HCT116 (cell line): ENCODE measurements at regions of chr12 and their contacts with region 1.

Region 1: DNA sequence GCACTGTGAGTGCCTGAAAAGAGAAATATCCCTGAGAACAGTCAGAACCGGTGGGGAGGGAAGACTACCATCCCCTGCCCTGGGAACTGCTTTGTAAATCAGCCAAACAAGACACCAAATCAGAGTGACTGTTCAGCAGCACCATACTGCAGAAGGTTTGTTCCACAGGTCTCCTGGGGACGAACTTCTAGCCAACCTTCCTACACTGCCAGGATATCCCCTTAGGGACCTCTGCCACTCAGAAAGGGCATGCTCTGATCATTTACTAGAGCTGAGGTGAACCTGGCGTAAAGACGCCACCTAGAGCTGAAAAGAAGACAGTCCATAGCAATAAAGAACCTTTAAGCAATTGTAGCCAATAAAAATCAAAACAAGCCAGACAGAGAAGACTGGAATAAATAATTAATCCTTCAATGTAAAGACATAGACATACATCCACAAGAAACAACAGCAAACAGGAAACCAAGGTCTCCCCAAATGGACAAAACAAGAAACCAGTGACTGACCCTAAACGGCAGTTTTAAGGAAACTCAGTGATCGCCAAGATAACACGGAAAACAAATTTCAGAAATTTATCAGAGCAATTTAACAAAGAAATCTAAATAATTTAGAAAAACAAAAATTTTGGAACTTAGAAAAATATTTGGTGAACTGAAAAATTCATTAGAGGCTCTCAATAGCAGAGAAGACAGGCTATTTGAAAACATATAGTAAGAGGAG is 228.1 kb upstream of the AMIGO2 start:
- DNase-seq: peak; percentile 49
- ATAC-seq: peak; percentile 100
- H3K4me3 ChIP-seq: no peak overlapping the region
- H3K27ac ChIP-seq: no peak overlapping the region
- H3K4me1 ChIP-seq: peaks cover 0 to 3% of the 10 kb centered on the region in 2 experiments; a peak in 1 of 4 replicates
- H3K27me3 ChIP-seq: no peaks in the 10 kb centered on the region
- CTCF ChIP-seq: peak; percentile 70 to 84 (median 79)
- POLR2A ChIP-seq: no peak
- RAD21 ChIP-seq: peak; percentile 95

Region 2: DNA sequence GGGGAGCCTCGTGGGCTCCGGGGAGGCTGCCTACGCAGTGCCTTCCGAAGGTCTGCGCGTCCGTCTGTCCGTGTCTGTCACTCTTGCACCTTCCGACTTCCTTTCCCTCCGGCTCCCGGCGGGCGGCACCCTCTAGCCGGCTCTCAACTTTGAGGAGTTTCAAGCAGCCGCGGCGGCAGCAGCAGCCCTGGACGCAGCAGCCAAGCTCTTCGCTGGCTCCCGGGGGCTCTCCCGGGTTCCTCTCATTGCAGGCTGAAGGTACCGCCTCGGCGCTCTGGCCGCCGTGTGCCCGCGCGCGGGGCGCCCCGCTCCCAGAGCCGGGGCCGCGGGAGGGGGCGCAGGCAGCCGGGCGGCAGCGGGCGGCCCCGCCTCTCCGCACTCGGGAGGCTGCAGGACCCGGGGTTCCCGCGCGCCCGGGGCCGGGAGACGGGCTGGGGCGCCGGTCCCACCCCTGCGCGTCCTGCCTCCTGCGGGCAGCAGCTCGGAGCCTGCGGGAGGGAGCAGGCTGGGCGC is 228.3 kb before region 1 on chr12 and contains the starts of genes AMIGO2 and PCED1B:
- CTCF ChIA-PET with region 1: no interaction called
- POLR2A ChIA-PET with region 1: no interaction called
- RAD21 ChIA-PET with region 1: no interaction called
- intact Hi-C with region 1: loop called (anchors 1 kb)
- DNase-seq: no peak
- ATAC-seq: peak; percentile 69
- H3K4me3 ChIP-seq: peak within 1 kb of the TSS; percentile 58 to 68
- H3K27ac ChIP-seq: peak within 1 kb of the TSS; percentile 39; the same call in 1 of the 2 replicates
- H3K4me1 ChIP-seq: peaks cover 18 to 39% of the 10 kb centered on the region in 2 experiments
- H3K27me3 ChIP-seq: no peaks in the 10 kb centered on the region
- CTCF ChIP-seq: peak in 2 of 3 experiments; percentile 17 to 43; a peak in 1 of 6 replicates
- POLR2A ChIP-seq: no peak
- RAD21 ChIP-seq: peak; percentile 78
- total RNA-seq, gene AMIGO2: 0.96 TPM
- total RNA-seq, gene PCED1B: 0.86 TPM

Region 3: GRCh38 chr12:47377414-47378221 is 69.8 kb after region 1 on chr12:
- CTCF ChIA-PET with region 1: no interaction called
- POLR2A ChIA-PET with region 1: no interaction called
- RAD21 ChIA-PET with region 1: no interaction called
- intact Hi-C with region 1: no loop called
- DNase-seq: no peak
- ATAC-seq: no peak
- H3K4me3 ChIP-seq: no peak overlapping the region
- H3K27ac ChIP-seq: no peak overlapping the region
- H3K4me1 ChIP-seq: no peaks in the 10 kb centered on the region
- H3K27me3 ChIP-seq: no peaks in the 10 kb centered on the region
- CTCF ChIP-seq: no peak
- POLR2A ChIP-seq: no peak
- RAD21 ChIP-seq: no peak

Region 4: GRCh38 chr12:47686645-47687240 is 378.9 kb after region 1 on chr12:
- CTCF ChIA-PET with region 1: no interaction called
- POLR2A ChIA-PET with region 1: no interaction called
- RAD21 ChIA-PET with region 1: no interaction called
- intact Hi-C with region 1: loop called (anchors 10 kb)
- DNase-seq: peak; percentile 18
- ATAC-seq: peak; percentile 75
- H3K4me3 ChIP-seq: no peak overlapping the region
- H3K27ac ChIP-seq: no peak overlapping the region
- H3K4me1 ChIP-seq: no peaks in the 10 kb centered on the region
- H3K27me3 ChIP-seq: no peaks in the 10 kb centered on the region
- CTCF ChIP-seq: peak; percentile 62 to 66 (median 63); a peak in 5 of 6 replicates
- POLR2A ChIP-seq: no peak
- RAD21 ChIP-seq: peak; percentile 73